Right ventricle myocardium inferior (tissue), 1 donor: ENCODE measurements at regions of chr17 and their contacts with region 1.

Region 1: DNA sequence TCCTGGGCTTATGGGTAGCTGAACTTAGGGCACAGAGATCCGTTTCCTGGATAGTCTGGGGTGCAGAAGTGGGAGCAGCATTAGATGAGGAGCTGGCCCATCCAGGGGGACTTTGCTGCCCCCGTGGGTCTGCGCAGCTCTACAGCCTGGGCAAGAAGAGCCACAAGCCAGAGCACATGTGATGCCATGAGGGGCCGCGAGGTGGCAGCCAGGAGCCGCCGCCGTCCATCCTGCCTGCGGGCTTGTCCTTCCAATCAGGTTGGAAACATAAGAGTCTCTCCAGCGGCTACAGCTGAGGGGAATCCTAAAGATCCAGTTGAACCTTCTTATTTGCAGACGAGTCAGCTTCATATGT is 21.9 kb downstream of the C1QTNF1 start:
- DNase-seq: peak; percentile 91
- ATAC-seq: peak; percentile 68

Region 2: DNA sequence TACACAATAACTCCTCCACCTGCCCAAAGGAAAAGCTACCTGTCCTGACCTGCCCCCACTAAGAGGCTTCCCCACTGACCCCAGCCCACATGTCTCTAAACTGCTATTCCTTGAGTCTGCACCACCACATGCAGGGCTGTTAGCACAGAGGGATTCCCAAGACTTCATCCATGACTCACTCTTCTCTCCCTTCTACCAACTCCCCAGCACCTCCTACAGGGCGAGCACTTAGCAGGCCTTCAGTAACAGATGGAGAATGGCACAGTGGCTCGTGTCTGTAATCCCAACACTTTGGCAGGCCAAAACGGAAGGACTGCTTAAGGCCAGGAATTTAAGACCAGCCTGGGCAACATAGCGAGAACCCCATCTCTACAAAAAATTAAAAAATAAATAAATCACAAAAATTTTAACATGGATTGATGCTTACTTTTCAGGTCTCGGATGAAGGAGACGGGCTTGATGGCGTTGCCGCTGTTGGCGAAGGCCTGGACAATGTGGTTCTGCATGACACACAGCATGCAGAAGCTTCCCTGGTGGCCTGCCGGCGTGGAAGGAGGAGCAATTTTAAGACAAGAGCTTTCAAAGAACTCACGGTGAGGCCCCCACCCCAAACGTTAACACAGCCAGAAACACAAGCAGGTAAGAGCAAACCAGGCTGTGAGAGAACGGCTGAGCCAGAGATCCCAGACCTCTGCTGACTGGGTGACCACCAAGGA is 217.2 kb before region 1 on chr17:
- intact Hi-C with region 1: no loop called
- DNase-seq: no peak
- ATAC-seq: no peak

Region 3: GRCh38 chr17:79082311-79083190 is 36.7 kb after region 1 on chr17:
- intact Hi-C with region 1: loop called (anchors 2 kb)
- DNase-seq: peak; percentile 81
- ATAC-seq: peak; percentile 43